Activated CD8-positive, alpha-beta memory T cell treated with anti-CD3 and anti-CD28 coated beads, Interleukin-2, amount 10 ng/mL, durations not matched to agents 7 days and 5 days (primary cell): ENCODE measurements at regions of chr2 and their contacts with region 1.

Region 1: DNA sequence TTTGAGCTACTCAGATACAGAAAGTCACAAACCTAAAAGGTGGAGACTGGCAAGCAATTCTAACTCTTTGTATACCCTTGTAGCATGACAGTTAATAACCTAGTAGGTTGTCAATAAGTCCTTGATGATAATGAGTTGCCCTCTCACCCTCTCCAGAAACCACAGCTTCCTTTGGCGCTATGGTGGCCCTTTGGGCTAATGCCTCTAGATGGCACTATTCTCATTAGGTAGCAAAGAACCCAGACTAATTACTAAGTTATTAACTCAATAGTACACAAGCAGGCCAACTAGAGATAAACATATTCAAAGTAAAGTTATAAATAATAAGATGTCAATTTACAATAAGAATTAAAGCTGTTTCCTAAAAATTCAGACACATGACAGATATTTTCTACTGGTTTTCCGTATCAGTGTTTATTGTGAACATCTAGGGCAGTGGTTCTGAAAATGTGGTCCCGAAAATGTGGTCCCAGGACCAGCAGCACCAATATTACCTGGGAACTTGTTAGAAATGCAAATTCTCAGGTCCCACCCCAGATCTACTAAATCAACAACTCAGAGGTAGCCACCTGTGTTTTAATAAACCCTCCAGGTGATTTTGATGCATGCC is 41.1 kb downstream of the LDAH start:
- DNase-seq: peak; percentile 42
- ATAC-seq: no peak
- H3K4me3 Mint-ChIP-seq: no peak overlapping the region
- H3K27ac Mint-ChIP-seq: no peak overlapping the region
- H3K4me1 Mint-ChIP-seq: no peaks in the 10 kb centered on the region
- H3K27me3 Mint-ChIP-seq: no peaks in the 10 kb centered on the region

Region 2: DNA sequence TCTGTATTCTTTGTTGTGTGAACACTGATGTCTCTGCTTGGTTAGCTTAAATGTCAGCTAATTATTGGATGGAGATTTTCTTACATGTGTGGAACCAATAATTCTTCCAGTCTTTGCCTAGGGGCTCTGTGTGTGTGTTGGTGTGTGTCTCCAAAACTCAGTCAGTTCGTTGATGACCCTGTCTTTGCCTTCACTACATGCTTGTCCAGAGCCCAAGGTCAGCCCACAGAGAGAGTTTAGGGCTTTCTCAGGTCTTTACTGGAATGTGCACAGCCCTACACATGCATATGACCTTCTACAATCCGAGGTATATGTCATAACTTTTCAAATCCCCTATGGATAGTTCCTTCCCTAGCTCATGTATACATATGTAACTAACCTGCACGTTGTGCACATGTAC is 115.3 kb after region 1 on chr2:
- CTCF ChIA-PET with region 1: no interaction called
- DNase-seq: no peak
- ATAC-seq: no peak
- H3K4me3 Mint-ChIP-seq: no peak overlapping the region
- H3K27ac Mint-ChIP-seq: no peak overlapping the region
- H3K4me1 Mint-ChIP-seq: no peaks in the 10 kb centered on the region
- H3K27me3 Mint-ChIP-seq: peaks cover 53% of the 10 kb centered on the region

Region 3: GRCh38 chr2:20962939-20963557 is 181.3 kb after region 1 on chr2:
- CTCF ChIA-PET with region 1: interaction called, 20 read pairs
- DNase-seq: peak; percentile 73
- ATAC-seq: peak; percentile 47
- H3K4me3 Mint-ChIP-seq: no peak overlapping the region
- H3K27ac Mint-ChIP-seq: no peak overlapping the region
- H3K4me1 Mint-ChIP-seq: no peaks in the 10 kb centered on the region
- H3K27me3 Mint-ChIP-seq: peaks cover 23% of the 10 kb centered on the region